ENCODE measurements at regions of chr2 and their contacts with region 1.

Region 1: DNA sequence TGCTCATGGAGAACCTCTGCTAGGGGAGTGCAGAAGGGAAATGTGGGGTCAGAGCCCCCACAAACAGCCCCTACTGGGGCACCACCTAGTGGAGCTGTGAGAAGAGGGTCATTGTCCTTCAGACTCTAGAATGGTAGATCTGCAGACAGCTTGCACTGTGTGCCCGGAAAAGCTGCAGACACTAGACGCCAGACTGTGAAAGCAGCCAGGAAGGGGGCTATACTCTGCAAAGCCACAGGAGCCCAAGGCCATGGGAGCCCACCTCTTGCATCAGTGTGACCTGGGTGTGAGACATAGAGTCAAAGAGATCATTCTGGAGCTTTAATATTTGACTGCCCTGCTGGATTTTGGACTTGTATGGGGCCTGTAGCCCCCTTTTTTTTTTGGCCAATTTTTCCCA is 60.9 kb downstream of the RPE start:
- DNase-seq: no peak
- ATAC-seq: no peak
- H3K4me3 ChIP-seq: no peak overlapping the region
- H3K27ac ChIP-seq: no peak overlapping the region
- H3K4me1 ChIP-seq: no peaks in the 10 kb centered on the region
- H3K27me3 ChIP-seq: no peaks in the 10 kb centered on the region
- CTCF ChIP-seq: no peak

Region 2: GRCh38 chr2:210195101-210195852 is 132.0 kb after region 1 on chr2:
- intact Hi-C with region 1: loop called (anchors 10 kb)
- DNase-seq: no peak
- ATAC-seq: peak; percentile 53
- H3K4me3 ChIP-seq: peak overlapping the region; percentile 17
- H3K27ac ChIP-seq: no peak overlapping the region
- H3K4me1 ChIP-seq: peaks cover 3% of the 10 kb centered on the region
- H3K27me3 ChIP-seq: no peaks in the 10 kb centered on the region
- CTCF ChIP-seq: peak; percentile 74

Measured in upper lobe of right lung (tissue), 1 donor.